ENCODE measurements at regions of chr2 and their contacts with region 1.

Region 1: DNA sequence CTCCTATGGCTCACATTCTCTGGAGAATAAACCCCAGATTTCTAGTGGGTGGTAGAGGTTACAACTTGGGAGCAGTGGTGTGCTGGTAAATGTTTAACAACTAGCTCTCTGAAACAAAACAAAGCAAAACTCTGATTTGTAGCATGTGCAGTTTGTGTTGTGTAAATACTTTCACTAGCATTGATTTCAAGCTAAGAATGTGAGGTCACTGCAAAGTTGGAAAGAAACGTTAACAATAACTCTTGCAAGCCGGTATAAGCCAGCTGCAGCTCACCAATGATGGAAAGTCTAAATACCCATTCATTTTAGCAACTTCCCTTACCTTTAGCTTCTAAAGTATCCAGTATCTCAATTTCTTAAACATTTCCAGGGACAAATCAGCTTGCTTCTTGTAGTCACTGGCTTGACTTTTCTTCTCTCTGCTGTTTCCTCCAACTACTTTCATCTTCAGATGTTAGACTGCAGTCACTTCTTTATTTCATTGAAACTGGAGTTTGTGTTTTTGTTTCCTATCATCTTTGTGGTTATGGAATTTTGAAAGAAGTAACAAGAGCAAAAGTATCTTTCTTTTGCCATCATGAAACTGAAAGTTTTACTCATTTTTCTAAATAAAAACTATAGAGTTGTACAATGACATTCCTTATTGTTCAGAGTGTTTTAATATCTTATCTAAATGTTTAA is 140.2 kb downstream of the PLCL1 start:
- DNase-seq: no peak
- ATAC-seq: peak; percentile 33
- H3K4me3 ChIP-seq: no peak overlapping the region
- H3K27ac ChIP-seq: no peak overlapping the region
- H3K4me1 ChIP-seq: no peaks in the 10 kb centered on the region
- H3K27me3 ChIP-seq: no peaks in the 10 kb centered on the region; a peak in 1 of 4 replicates
- CTCF ChIP-seq: no peak
- EP300 ChIP-seq: no peak
- POLR2A ChIP-seq: no peak
- RAD21 ChIP-seq: no peak

Region 2: DNA sequence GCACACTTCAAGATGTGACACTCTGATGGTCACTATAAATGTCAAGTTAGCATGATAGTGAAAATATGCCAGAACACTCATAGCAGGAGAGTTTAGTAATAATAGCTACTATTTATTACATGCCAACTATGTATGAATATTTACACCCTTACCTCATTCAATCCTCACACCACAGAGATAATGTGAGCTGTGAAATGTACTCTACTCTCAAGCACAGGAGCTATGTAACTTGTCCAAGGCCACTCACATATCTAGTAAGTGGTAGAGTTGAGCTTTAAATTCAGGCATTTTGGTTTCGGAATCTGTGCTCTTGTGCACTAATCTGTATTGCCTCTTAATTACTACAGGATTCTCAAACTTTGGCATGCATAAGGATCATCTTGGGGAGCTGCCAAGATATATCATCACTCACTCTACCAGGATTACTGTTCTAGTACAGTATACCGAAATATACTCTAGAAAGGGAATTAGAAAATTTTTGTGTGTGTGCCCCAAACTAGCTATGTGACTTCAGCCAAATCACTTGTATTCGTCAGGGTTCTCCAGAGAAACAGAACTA is 14.1 kb after region 1 on chr2:
- CTCF ChIA-PET with region 1: interaction called, 3 read pairs
- POLR2A ChIA-PET with region 1: no interaction called
- RAD21 ChIA-PET with region 1: interaction called, 5 read pairs
- SMC1A ChIA-PET with region 1: interaction called, 23 read pairs
- in situ Hi-C with region 1: no loop called
- intact Hi-C with region 1: no loop called
- DNase-seq: no peak
- ATAC-seq: peak; percentile 36; the same call in 2 of the 3 replicates
- H3K4me3 ChIP-seq: no peak overlapping the region
- H3K27ac ChIP-seq: no peak overlapping the region
- H3K4me1 ChIP-seq: no peaks in the 10 kb centered on the region
- H3K27me3 ChIP-seq: no peaks in the 10 kb centered on the region
- CTCF ChIP-seq: no peak
- EP300 ChIP-seq: no peak
- POLR2A ChIP-seq: no peak
- RAD21 ChIP-seq: no peak